ENCODE measurements at regions of chr22 and their contacts with region 1.

Region 1: DNA sequence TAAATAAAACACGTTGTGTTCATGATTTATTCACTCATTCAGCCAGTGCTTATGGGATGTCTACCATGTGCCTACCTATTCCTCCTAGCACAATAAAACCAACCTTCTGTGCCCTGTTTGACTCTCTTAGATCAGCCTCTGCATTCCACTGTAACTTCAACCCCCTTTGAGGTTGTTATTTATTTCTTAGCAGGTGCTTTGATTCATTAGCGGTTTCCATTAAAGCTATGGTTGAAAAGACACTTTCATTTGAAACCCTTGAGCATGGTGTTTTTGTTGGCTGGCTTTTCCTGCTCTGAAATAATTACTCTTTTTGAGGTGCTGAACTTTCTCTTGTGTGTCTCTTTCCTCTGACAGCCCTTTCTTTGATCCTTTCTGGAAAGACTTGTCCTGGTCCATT is 570.6 kb upstream of the LARGE1 start:
- DNase-seq: no peak
- H3K4me3 ChIP-seq: no peak overlapping the region
- H3K27ac ChIP-seq: no peak overlapping the region
- H3K4me1 ChIP-seq: no peaks in the 10 kb centered on the region
- H3K27me3 ChIP-seq: no peaks in the 10 kb centered on the region
- CTCF ChIP-seq: no peak
- POLR2A ChIP-seq: no peak

Region 2: GRCh38 chr22:34592123-34592740 is 101.3 kb after region 1 on chr22:
- intact Hi-C with region 1: loop called (anchors 10 kb)
- DNase-seq: no peak
- H3K4me3 ChIP-seq: no peak overlapping the region
- H3K27ac ChIP-seq: no peak overlapping the region
- H3K4me1 ChIP-seq: no peaks in the 10 kb centered on the region
- H3K27me3 ChIP-seq: peaks cover 0 to 13% (median 0%) of the 10 kb centered on the region in 7 donors
- CTCF ChIP-seq: no peak
- POLR2A ChIP-seq: no peak

Measured in spleen (tissue), 13 donors.